ENCODE measurements at regions of chr10 and their contacts with region 1.

Region 1: GRCh38 chr10:132588301-132589013 is 50.9 kb downstream of the INPP5A start:
- DNase-seq: no peak
- ATAC-seq: no peak
- H3K4me3 ChIP-seq: no peak overlapping the region
- H3K27ac ChIP-seq: no peak overlapping the region
- H3K4me1 ChIP-seq: peaks cover 29% of the 10 kb centered on the region
- H3K27me3 ChIP-seq: no peaks in the 10 kb centered on the region
- CTCF ChIP-seq: no peak

Region 2: GRCh38 chr10:132618158-132618919 is 29.9 kb after region 1 on chr10:
- CTCF ChIA-PET with region 1: no interaction called
- POLR2A ChIA-PET with region 1: interaction called, 13 read pairs
- in situ Hi-C with region 1: no loop called
- intact Hi-C with region 1: no loop called
- DNase-seq: no peak
- ATAC-seq: no peak
- H3K4me3 ChIP-seq: no peak overlapping the region
- H3K27ac ChIP-seq: no peak overlapping the region
- H3K4me1 ChIP-seq: no peaks in the 10 kb centered on the region
- H3K27me3 ChIP-seq: no peaks in the 10 kb centered on the region
- CTCF ChIP-seq: no peak

Measured in Panc1 (cell line).